Naive thymus-derived CD4-positive, alpha-beta T cell (primary cell): ENCODE measurements at regions of chr12 and their contacts with region 1.

Region 1: DNA sequence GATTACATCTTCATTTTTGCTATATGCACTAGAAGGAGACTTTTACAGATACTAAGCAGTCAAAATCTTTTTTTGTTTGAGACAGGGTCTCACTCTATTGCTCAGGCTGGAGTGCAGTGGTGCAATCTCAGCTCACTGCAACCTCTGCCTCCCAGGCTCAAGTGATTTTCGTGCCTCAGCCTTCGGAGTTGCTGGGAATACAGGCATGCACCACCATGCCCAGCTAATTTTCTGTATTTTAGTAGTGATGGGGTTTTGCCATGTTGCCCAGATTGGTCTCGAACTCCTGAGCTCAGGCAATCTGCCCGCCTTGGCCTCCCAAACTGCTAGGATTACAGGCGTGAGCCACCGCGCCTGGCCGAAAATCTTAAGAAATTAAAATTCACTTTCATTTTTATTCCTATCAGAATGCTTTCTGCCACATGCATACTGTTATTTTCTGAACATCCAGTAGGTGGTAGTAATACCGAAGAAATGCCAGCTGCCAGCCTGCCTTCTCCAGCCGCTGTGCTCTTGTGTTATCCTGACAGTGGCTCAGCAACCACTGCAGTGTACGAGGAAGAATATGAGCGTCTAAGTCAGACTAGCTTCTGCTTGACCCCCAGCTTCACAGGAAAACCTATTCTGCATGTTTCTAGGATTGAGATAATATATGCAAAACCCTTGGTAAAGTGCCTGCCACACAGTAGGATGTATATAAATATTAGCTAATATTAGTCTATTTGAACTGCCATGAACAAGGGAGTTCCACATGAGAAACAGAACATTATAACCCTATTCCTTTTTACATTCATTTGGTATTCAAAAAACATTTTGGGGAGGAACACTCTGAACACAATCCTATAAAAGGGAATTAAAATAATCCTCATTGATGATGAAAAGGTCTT is 54.2 kb downstream of the RPAP3 start:
- DNase-seq: peak in 8 of 9 donors; percentile 39 to 69 (median 56)
- ATAC-seq: peak; percentile 97
- H3K4me3 ChIP-seq: peak overlapping the region; percentile 38
- H3K4me3 Mint-ChIP-seq: peak overlapping the region; percentile 21 to 75 (median 44)
- H3K27ac ChIP-seq: peak overlapping the region; percentile 9
- H3K27ac Mint-ChIP-seq: peak overlapping the region in 8 of 9 donors; percentile 11 to 94 (median 64)
- H3K4me1 ChIP-seq: peaks cover 5 to 6% of the 10 kb centered on the region in 2 donors
- H3K4me1 Mint-ChIP-seq: peaks cover 8 to 21% (median 16%) of the 10 kb centered on the region in 7 donors
- H3K27me3 ChIP-seq: no peaks in the 10 kb centered on the region
- H3K27me3 Mint-ChIP-seq: no peaks in the 10 kb centered on the region

Region 2: DNA sequence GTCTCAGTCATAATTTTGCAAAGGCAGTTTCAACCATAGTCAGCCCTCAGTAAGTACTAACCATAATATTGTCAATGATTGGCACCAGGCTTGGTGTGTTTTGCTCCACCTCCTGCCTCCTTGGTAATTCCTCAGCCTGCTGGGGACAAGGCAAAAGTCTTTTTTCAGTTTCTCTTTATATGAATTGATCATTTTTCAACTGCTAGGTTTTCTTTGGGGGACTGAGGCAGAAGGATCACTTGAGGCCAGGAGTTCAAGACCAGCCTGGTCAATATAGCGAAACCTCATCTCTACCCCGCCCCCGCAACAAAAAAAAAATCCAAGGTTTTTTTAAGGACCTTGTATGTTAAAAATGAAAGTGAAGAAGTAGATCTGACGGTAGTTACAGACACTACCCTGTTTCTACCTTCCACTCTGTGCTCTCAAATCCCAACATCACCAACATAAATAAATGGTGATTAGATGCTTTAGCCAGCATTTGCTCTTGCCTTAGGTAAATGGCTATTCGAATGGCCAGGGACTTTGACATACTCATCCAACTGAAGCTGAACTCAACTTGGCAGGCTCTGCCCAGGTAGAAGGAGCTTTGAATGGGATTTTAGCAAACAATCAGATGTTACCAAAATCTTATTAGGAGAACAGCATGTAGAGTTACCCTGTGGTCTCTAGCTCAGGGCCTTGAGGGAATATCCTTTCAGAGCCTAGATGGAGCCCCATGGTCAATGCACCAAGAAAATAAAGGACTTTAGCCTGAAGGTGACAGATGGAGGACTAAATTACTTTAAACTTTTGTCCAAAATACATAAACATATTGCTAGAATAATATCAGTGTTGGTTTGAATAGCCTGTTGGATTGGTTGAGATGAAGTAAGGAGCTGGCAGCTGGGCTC is 444.9 kb before region 1 on chr12:
- CTCF ChIA-PET with region 1: no interaction called
- POLR2A ChIA-PET with region 1: no interaction called
- intact Hi-C with region 1: no loop called
- DNase-seq: peak in 1 of 9 donors; percentile 23
- ATAC-seq: no peak
- H3K4me3 ChIP-seq: peak overlapping the region; percentile 42
- H3K4me3 Mint-ChIP-seq: peak overlapping the region; percentile 60 to 99 (median 84)
- H3K27ac ChIP-seq: peak overlapping the region; percentile 76
- H3K27ac Mint-ChIP-seq: peak overlapping the region; percentile 41 to 98 (median 93)
- H3K4me1 ChIP-seq: peaks cover 72 to 83% of the 10 kb centered on the region in 2 donors
- H3K4me1 Mint-ChIP-seq: peaks cover 55 to 93% (median 75%) of the 10 kb centered on the region in 7 donors
- H3K27me3 ChIP-seq: no peaks in the 10 kb centered on the region
- H3K27me3 Mint-ChIP-seq: no peaks in the 10 kb centered on the region

Region 3: DNA sequence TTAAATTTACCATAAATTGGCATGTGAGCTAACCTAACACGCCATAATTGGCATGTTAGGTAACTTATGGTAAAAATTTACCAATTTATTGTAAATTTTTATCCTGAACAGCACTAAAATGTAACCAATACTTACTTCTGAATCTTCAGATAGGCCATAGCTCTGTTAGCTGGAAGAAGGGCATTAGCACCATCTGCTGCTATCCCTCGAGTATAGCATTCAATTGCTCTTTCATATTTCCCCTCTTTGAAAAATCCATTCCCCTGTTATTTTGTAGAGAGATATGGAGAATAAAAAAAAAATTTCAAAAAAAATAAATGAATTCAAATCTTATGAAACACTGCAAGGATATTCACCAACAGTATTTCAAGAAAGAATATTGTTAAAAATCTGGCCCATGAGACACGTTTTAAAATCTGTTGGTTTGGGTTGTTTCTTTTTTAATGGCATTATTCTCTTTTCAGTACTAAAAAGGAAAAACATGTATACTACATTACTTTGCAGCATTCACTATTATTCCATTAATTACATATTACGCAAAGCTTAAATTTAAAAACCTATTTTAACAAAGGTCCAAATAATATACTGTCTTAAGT is 35.1 kb after region 1 on chr12:
- CTCF ChIA-PET with region 1: interaction called, 5 read pairs
- POLR2A ChIA-PET with region 1: no interaction called
- intact Hi-C with region 1: loop called (anchors 1 kb)
- DNase-seq: peak in 7 of 9 donors; percentile 21 to 53 (median 43)
- ATAC-seq: peak; percentile 76
- H3K4me3 ChIP-seq: no peak overlapping the region
- H3K4me3 Mint-ChIP-seq: no peak overlapping the region
- H3K27ac ChIP-seq: no peak overlapping the region
- H3K27ac Mint-ChIP-seq: no peak overlapping the region
- H3K4me1 ChIP-seq: peaks cover 0 to 3% of the 10 kb centered on the region in 2 donors
- H3K4me1 Mint-ChIP-seq: peaks cover 9 to 19% (median 14%) of the 10 kb centered on the region in 7 donors
- H3K27me3 ChIP-seq: no peaks in the 10 kb centered on the region
- H3K27me3 Mint-ChIP-seq: no peaks in the 10 kb centered on the region

Region 4: DNA sequence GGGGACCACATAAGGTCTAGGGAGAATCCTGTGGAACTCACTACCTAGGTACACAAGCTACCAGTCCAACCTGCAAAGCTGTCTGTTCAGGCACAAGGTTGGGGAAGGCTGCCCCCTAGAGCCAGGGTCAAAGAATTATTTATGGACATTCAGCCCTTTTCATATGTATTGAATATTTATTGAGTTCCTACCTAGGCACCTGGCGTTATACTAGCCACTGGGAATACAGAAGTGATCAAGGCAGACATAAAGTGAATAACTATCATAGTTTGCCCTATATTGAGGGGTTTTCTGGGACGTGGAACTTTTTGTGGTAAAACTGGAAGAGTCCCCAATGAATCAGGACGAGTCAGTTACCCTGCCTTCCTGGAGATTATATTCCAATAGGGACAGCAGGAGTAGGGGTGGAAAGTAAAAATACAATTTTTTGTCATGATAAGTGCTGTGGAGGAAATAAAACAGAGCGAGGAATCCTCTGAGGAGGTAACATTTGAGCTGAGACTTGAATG is 115.7 kb after region 1 on chr12:
- CTCF ChIA-PET with region 1: interaction called, 4 read pairs
- POLR2A ChIA-PET with region 1: no interaction called
- intact Hi-C with region 1: loop called in 1 of 2 experiments (anchors 5 kb)
- DNase-seq: peak; percentile 40 to 73 (median 57)
- ATAC-seq: peak; percentile 81
- H3K4me3 ChIP-seq: no peak overlapping the region
- H3K4me3 Mint-ChIP-seq: no peak overlapping the region
- H3K27ac ChIP-seq: no peak overlapping the region
- H3K27ac Mint-ChIP-seq: no peak overlapping the region
- H3K4me1 ChIP-seq: peaks cover 3 to 10% of the 10 kb centered on the region in 2 donors
- H3K4me1 Mint-ChIP-seq: peaks cover 0 to 16% (median 5%) of the 10 kb centered on the region in 7 donors
- H3K27me3 ChIP-seq: no peaks in the 10 kb centered on the region
- H3K27me3 Mint-ChIP-seq: peaks cover 0 to 13% (median 0%) of the 10 kb centered on the region in 5 donors